H1 (cell line): ENCODE measurements at regions of chr11 and their contacts with region 1.

Region 1: GRCh38 chr11:101428918-101429317 is 154.9 kb downstream of the TRPC6 start:
- DNase-seq: no peak
- H3K4me3 ChIP-seq: no peak overlapping the region
- H3K27ac ChIP-seq: no peak overlapping the region
- H3K4me1 ChIP-seq: peaks cover 0 to 7% (median 0%) of the 10 kb centered on the region in 4 experiments; a peak in 2 of 7 replicates
- H3K27me3 ChIP-seq: no peaks in the 10 kb centered on the region
- CTCF ChIP-seq: peak in 2 of 3 experiments; percentile 68 to 72; a peak in 3 of 4 replicates
- EP300 ChIP-seq: no peak
- POLR2A ChIP-seq: no peak
- RAD21 ChIP-seq: peak; percentile 92 to 93

Region 2: GRCh38 chr11:101323997-101324396 is 104.9 kb before region 1 on chr11:
- CTCF ChIA-PET with region 1: no interaction called
- POLR2A ChIA-PET with region 1: no interaction called
- DNase-seq: no peak
- H3K4me3 ChIP-seq: no peak overlapping the region
- H3K27ac ChIP-seq: no peak overlapping the region
- H3K4me1 ChIP-seq: no peaks in the 10 kb centered on the region
- H3K27me3 ChIP-seq: no peaks in the 10 kb centered on the region
- CTCF ChIP-seq: peak; percentile 8 to 31 (median 15)
- EP300 ChIP-seq: no peak
- POLR2A ChIP-seq: no peak
- RAD21 ChIP-seq: peak; percentile 59 to 61

Region 3: DNA sequence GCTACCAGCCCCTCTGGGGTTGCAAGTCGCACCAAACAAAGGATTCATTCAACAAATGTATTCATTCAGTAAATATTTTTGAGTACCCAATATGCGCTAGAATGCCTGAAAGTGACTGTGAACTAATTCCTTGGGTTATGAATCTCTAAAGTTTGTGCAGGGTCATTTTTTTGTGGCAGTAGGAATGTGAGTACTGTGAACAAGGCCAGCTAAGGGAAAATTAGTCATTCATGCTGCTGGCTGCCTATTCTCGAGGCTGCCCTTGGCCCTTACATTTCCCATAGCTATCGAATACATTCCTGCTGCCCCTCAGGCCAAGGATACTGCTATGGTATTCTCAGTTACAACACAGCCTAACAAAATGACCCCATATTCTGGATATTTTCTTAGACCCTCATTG is 13.3 kb after region 1 on chr11:
- CTCF ChIA-PET with region 1: interaction called, 25 read pairs
- POLR2A ChIA-PET with region 1: no interaction called
- DNase-seq: no peak
- H3K4me3 ChIP-seq: no peak overlapping the region
- H3K27ac ChIP-seq: no peak overlapping the region
- H3K4me1 ChIP-seq: no peaks in the 10 kb centered on the region
- H3K27me3 ChIP-seq: no peaks in the 10 kb centered on the region
- CTCF ChIP-seq: no peak
- EP300 ChIP-seq: no peak
- POLR2A ChIP-seq: no peak
- RAD21 ChIP-seq: no peak

Region 4: DNA sequence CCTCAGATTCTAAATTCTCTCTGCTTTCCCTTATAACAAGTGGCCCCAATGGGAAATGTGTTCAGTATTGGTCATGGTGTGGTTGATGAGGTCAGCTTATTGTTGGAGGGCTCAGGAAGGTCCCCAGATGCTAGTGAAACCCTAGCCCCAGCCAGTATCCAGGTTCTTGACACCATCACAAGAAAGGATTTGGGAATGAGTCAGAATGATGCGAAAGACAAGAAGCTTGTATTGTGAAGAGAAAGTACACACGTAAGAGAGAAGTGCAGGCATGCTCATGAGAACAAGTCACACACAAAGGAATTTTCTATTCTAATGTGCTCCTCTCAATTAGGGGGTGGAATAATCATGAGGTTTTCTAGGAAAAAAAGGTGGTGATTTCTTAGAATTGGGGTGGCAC is 189.8 kb after region 1 on chr11:
- CTCF ChIA-PET with region 1: interaction called, 10 read pairs
- POLR2A ChIA-PET with region 1: no interaction called
- DNase-seq: no peak
- H3K4me3 ChIP-seq: no peak overlapping the region
- H3K27ac ChIP-seq: no peak overlapping the region
- H3K4me1 ChIP-seq: peaks cover 0 to 3% (median 0%) of the 10 kb centered on the region in 4 experiments; a peak in 1 of 7 replicates
- H3K27me3 ChIP-seq: peaks cover 0 to 1% (median 0%) of the 10 kb centered on the region in 4 experiments; a peak in 1 of 7 replicates
- CTCF ChIP-seq: no peak
- EP300 ChIP-seq: no peak
- POLR2A ChIP-seq: no peak
- RAD21 ChIP-seq: no peak

Region 5: GRCh38 chr11:101880222-101880621 is 451.3 kb after region 1 on chr11:
- CTCF ChIA-PET with region 1: interaction called, 10 read pairs
- POLR2A ChIA-PET with region 1: no interaction called
- DNase-seq: no peak
- H3K4me3 ChIP-seq: no peak overlapping the region
- H3K27ac ChIP-seq: no peak overlapping the region
- H3K4me1 ChIP-seq: no peaks in the 10 kb centered on the region
- H3K27me3 ChIP-seq: no peaks in the 10 kb centered on the region
- CTCF ChIP-seq: peak in 2 of 3 experiments; percentile 29 to 42; a peak in 2 of 4 replicates
- EP300 ChIP-seq: no peak
- POLR2A ChIP-seq: no peak
- RAD21 ChIP-seq: peak; percentile 29 to 31; a peak in 3 of 4 replicates

Region 6: GRCh38 chr11:102007567-102008437 is 578.9 kb after region 1 on chr11:
- CTCF ChIA-PET with region 1: interaction called, 16 read pairs
- POLR2A ChIA-PET with region 1: no interaction called
- DNase-seq: no peak
- H3K4me3 ChIP-seq: no peak overlapping the region
- H3K27ac ChIP-seq: no peak overlapping the region
- H3K4me1 ChIP-seq: peaks cover 0 to 3% (median 0%) of the 10 kb centered on the region in 4 experiments; a peak in 1 of 7 replicates
- H3K27me3 ChIP-seq: no peaks in the 10 kb centered on the region
- CTCF ChIP-seq: peak in 2 of 3 experiments; percentile 23 to 29; a peak in 2 of 4 replicates
- EP300 ChIP-seq: no peak
- POLR2A ChIP-seq: no peak
- RAD21 ChIP-seq: peak in 1 of 2 experiments; percentile 56